ENCODE measurements at regions of chr7 and their contacts with region 1.

Region 1: DNA sequence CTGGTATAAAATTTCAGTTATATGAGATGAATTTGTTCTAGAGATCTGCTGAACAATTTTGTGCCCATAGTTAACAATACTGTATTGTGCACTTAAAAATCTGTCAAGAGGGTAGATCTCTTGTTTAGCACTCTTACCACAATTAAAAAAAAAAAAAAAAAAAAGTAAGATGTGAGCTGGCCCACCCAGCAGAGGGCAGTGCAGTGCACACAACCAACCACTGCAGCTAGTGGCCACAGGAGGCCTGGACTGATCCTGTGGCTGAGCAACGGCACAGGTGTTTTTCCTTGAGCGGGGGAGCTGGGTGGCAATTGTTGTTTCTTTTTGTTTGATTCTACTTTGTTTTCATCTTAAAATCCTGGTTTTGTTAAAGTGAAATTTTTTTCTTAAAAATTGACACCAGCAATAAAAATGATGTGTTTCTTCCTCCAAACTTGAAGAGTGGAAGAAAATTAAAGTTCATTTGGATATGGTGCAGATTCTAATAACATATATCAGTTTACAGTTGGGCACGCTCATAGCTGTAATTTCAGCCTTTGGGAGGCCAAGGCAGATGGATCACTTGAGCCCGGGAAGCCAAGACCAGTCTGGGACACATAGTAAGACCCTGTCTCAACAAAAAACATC is 171.1 kb upstream of the TBX20 start:
- DNase-seq: peak; percentile 81
- H3K4me3 ChIP-seq: no peak overlapping the region
- H3K27ac ChIP-seq: no peak overlapping the region
- H3K4me1 ChIP-seq: no peaks in the 10 kb centered on the region
- H3K27me3 ChIP-seq: peaks cover 0 to 7% (median 0%) of the 10 kb centered on the region in 7 donors
- CTCF ChIP-seq: peak; percentile 39 to 77 (median 61)
- POLR2A ChIP-seq: no peak

Region 2: GRCh38 chr7:35624299-35625186 is 199.6 kb after region 1 on chr7:
- intact Hi-C with region 1: loop called (anchors 10 kb)
- DNase-seq: no peak
- H3K4me3 ChIP-seq: no peak overlapping the region
- H3K27ac ChIP-seq: no peak overlapping the region
- H3K4me1 ChIP-seq: peaks cover 2 to 9% (median 6%) of the 10 kb centered on the region in 6 donors
- H3K27me3 ChIP-seq: no peaks in the 10 kb centered on the region
- CTCF ChIP-seq: peak; percentile 65 to 90 (median 81)
- POLR2A ChIP-seq: no peak